ENCODE measurements at regions of chr13 and their contacts with region 1.

Region 1: DNA sequence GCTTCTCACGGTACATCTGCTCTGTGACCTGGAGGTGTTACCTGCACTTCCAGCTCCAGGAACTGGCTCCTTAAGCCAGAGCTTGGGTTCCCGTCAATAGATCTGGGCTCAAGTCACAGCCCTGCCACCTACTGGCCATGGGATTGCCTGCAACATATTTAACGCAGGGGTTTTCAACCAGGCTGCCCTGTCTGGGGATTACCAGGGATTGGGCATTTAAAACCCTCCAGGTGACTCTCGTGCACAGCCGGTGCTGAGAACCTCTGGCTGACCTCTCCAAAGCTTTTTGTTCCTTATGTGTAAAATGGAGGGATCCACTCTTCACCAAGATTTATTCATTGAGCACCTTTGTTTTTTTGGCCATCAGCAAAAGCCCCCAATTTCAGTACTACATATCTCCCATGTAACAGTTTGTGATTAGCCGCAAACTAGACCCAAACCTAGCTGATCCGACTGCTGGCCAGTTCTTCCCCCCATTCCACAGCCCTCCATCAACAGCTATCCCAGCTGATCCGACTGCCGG is 76.6 kb upstream of the STK24 start:
- DNase-seq: peak; percentile 78 to 87
- H3K4me3 ChIP-seq: no peak overlapping the region
- H3K27ac ChIP-seq: peak overlapping the region; percentile 18; the same call in 1 of the 2 replicates
- H3K4me1 ChIP-seq: peaks cover 47% of the 10 kb centered on the region
- H3K27me3 ChIP-seq: no peaks in the 10 kb centered on the region
- CTCF ChIP-seq: peak; percentile 96

Region 2: DNA sequence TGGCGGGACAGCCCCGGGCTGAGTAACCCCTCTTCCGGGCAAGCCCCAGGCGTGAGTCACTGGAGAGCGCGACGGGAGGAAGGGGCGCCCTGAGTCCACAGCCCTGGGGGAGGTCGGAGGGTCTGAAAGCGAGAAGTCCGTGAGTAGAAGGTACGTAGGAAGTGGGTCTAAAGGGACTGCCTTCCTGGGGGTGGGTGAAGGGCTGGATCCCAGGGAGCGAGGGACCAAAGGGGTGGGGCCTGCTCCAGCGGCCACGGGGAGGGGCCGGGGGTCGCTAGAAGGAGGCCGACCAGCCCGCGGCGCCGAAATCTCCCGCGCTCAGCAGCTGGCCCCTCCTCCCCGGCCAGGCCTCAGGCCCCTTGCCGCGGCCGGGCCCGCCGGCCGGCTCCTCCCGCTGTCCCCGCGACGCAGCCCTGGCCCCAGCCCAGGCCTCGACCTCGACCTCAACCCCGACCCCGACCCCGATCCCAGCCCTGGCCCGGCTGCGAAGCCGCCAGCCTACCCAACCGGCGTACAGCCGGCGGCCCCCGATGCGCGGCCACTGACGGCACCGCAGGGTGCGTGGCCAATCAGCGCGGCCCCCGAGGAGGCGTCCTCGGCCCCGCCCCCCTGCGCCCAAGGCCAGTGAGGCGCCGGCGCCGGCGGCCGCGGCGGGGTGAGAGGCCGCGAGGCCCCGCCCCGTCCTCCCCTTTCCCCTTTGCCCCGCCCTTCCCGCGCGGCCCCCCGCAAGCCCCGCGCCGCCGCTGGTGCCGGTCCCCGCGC is 677.5 kb before region 1 on chr13:
- CTCF ChIA-PET with region 1: no interaction called
- POLR2A ChIA-PET with region 1: no interaction called
- intact Hi-C with region 1: loop called (anchors 1 kb)
- DNase-seq: peak; percentile 74 to 91
- H3K4me3 ChIP-seq: peak overlapping the region; percentile 92
- H3K27ac ChIP-seq: peak overlapping the region; percentile 61
- H3K4me1 ChIP-seq: peaks cover 21% of the 10 kb centered on the region
- H3K27me3 ChIP-seq: no peaks in the 10 kb centered on the region
- CTCF ChIP-seq: no peak

Region 3: GRCh38 chr13:98411681-98412201 is 241.8 kb before region 1 on chr13:
- CTCF ChIA-PET with region 1: no interaction called
- POLR2A ChIA-PET with region 1: no interaction called
- intact Hi-C with region 1: no loop called
- DNase-seq: no peak
- H3K4me3 ChIP-seq: no peak overlapping the region
- H3K27ac ChIP-seq: no peak overlapping the region
- H3K4me1 ChIP-seq: peaks cover 20% of the 10 kb centered on the region
- H3K27me3 ChIP-seq: no peaks in the 10 kb centered on the region
- CTCF ChIP-seq: no peak

Region 4: GRCh38 chr13:98476538-98476966 is 177.0 kb before region 1 on chr13:
- CTCF ChIA-PET with region 1: no interaction called
- POLR2A ChIA-PET with region 1: interaction called, 5 read pairs
- intact Hi-C with region 1: loop called (anchors 2 kb)
- DNase-seq: peak; percentile 80 to 95
- H3K4me3 ChIP-seq: peak overlapping the region; percentile 20; the same call in 1 of the 2 replicates
- H3K27ac ChIP-seq: peak overlapping the region; percentile 94
- H3K4me1 ChIP-seq: peaks cover 44% of the 10 kb centered on the region
- H3K27me3 ChIP-seq: no peaks in the 10 kb centered on the region
- CTCF ChIP-seq: no peak

Region 5: DNA sequence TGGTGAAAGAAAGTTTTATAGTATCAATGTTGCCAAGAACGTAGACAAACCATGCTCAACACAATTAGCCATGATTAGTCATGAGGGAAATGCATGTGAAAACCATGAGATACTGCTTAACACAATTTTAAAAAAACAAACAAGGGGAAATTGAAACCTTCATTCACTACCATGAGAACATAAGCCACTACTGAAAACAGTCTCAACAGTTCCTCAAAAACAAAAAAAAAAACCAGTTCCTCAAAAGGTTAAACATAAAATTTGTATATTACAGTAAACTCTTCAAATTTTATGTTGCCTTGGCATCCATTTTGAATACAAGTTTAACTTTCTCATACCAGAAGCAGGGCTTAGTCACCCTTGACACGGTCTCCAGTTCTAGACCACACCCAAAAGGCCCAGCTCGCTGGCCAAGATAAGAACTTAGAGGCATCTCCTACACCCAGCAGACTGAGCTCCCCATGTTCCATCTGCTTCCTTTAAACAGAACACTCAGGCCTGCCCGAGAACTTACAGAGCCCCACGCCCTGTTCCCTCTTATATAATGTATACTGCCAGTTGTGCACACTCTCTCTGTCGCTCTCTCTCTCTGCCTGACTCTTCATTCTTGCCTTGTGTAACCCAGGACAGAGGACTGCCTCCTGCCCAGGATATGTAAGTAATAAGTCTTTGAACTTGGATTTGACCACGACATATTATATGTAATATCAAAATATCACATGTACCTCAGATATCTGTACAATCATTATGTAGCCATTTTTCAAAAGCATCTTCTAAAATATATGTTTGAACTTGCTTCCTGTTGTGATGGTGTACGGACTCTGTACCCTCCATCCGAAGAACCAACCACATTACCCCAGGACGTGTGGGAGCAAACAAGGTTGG is 144.0 kb before region 1 on chr13:
- CTCF ChIA-PET with region 1: no interaction called
- POLR2A ChIA-PET with region 1: interaction called, 4 read pairs
- intact Hi-C with region 1: loop called (anchors 1 kb)
- DNase-seq: peak; percentile 71 to 91
- H3K4me3 ChIP-seq: peak overlapping the region; percentile 31; the same call in 1 of the 2 replicates
- H3K27ac ChIP-seq: peak overlapping the region; percentile 99
- H3K4me1 ChIP-seq: peaks cover 58% of the 10 kb centered on the region
- H3K27me3 ChIP-seq: no peaks in the 10 kb centered on the region
- CTCF ChIP-seq: no peak

Region 6: DNA sequence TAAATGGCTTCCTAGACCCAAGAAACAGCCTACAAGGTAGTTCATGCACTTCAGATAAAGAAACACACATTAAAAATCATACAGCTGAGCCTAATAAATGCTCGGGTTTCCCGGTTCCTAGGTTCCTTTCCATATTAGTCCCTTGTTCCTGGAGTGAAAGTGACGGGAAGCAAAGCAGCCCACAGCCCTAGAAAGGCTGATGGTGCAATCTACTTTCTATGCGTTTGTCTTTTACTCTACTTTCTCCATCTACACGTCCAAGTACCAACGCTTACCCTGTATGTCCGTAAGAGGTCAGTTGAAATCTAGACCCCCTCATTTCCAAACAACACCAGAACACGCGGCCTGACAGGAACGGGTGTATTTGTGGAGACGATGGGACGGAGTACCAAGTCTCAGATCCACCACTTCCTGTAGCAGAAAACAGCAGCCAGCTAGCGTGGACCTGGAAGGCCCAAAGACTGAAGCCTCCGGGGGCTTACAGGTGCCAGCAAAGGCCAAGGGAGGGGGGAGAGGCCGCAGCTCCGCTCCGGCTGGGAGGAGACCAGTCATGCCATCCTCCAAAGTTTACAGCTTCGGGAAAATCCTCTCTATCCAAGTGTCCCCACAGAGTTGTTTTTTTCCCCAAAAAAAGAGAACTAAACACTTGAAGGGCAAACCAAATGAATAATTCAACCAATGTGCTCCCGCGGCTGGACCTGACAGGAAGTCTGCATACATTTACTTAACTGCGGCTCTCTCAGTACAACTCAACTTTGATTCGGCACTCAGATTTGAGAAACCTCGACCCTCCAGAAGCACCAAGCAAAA is 110.8 kb before region 1 on chr13:
- CTCF ChIA-PET with region 1: interaction called, 10 read pairs
- POLR2A ChIA-PET with region 1: no interaction called
- intact Hi-C with region 1: no loop called
- DNase-seq: no peak
- H3K4me3 ChIP-seq: no peak overlapping the region
- H3K27ac ChIP-seq: no peak overlapping the region
- H3K4me1 ChIP-seq: peaks cover 13% of the 10 kb centered on the region
- H3K27me3 ChIP-seq: no peaks in the 10 kb centered on the region
- CTCF ChIP-seq: no peak

Region 7: DNA sequence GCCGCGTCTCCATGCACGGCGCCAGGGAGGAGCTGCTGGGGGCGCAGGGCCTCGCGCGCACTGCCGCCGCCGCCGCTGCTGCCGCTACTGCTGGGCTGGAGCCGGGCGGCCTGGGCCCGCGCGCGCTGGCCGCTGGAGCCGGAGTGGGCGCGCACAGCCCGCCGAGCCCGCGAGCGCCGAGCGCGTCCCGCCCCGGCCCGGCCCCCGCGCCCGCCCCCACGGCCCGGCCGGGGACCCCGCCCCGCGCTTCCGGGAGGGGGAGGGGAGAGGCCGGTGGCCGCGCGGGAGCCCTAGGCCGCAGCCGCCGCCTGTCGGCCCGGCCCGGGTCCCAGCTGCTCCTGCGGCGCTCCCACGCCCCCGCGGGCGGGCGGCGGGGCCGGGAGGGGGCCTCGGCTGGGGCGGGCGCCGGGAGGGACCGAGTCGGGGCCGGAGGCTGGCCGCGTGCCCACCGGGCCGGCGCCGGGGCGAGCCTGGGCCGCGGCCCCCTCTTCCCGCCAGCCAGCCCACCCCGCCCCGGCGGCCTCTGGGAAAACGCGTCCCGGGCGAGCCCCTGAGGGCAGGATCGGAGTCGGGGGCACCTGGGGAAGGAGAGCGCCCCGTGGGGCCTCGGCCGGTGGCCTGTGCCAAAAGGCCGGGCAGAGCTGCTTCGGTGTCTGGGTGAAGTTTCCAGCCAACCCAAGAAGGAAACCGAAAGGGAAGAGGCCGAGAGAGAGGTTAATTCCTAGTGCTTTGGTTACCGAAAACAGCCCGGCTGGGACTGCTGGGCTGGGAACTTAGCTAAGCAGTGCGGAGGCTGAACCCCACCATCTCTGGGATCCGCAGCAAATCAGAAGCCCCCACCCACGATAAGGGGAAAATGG is 76.3 kb before region 1 on chr13 and contains the start of gene STK24:
- CTCF ChIA-PET with region 1: interaction called, 3 read pairs
- POLR2A ChIA-PET with region 1: no interaction called
- intact Hi-C with region 1: loop called (anchors 1 kb)
- DNase-seq: peak; percentile 45 to 80
- H3K4me3 ChIP-seq: peak within 1 kb of the TSS; percentile 98
- H3K27ac ChIP-seq: peak within 1 kb of the TSS; percentile 93
- H3K4me1 ChIP-seq: peaks cover 49% of the 10 kb centered on the region
- H3K27me3 ChIP-seq: no peaks in the 10 kb centered on the region
- CTCF ChIP-seq: no peak
- total RNA-seq, gene STK24: 134 and 139 TPM in 2 replicates

Region 8: DNA sequence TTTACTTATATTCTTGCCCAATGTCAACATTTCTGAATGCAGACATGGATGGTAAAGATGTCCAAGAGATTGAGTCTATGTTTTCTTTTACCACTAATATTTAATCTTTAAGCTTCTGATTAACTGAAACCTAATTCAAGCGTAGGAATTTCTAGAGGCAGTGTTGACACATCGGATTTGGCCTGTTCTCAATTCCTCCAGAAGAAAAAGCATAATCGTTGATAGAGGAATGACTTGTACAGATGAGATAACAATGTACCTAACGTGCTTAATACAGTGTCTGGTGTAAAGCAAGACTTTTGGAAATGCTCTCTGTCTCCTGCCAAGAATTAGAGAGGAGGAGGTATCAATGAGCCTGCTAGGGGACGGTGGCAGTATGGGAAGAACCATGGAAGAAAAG is 63.7 kb after region 1 on chr13:
- CTCF ChIA-PET with region 1: no interaction called
- POLR2A ChIA-PET with region 1: no interaction called
- intact Hi-C with region 1: no loop called
- DNase-seq: peak in 1 of 2 experiments; percentile 28
- H3K4me3 ChIP-seq: no peak overlapping the region
- H3K27ac ChIP-seq: no peak overlapping the region
- H3K4me1 ChIP-seq: peaks cover 8% of the 10 kb centered on the region
- H3K27me3 ChIP-seq: no peaks in the 10 kb centered on the region
- CTCF ChIP-seq: no peak

Region 9: DNA sequence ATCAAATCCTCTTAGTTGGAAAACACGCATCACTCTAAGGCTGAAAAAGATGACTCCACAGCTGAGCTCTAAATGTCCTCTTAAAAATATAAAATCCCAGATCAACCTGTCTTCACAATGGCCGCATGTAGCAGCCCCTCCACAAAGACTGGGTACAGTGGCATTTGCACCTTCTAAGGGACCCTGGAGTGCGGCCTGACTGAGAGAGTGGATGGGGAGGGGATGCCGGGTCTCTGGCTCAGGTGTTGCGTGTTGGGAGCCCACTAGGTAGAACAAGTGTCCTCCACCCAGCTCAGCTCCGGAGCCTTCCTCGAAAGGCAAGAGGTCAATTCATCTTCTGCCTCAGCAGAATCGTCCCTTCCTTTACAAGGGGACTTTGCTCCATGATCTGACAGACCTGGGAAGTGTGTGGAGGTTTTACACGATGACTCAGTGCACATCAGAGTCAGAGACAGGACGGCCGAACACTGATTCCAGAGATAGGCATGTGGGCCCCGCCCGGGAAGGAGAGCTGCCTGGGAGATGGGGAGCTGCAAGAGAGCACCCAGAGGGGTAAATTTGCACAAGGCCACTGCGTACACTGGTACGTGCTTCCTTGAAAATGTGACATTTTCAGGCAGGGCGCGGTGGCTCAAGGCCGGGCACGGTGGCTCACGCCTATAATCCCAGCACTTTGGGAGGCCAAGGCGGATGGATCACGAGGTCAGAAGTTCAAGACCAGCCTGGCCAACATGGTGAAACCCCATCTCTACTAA is 122.5 kb after region 1 on chr13:
- CTCF ChIA-PET with region 1: no interaction called
- POLR2A ChIA-PET with region 1: no interaction called
- intact Hi-C with region 1: no loop called
- DNase-seq: peak; percentile 87 to 99
- H3K4me3 ChIP-seq: no peak overlapping the region
- H3K27ac ChIP-seq: peak overlapping the region; percentile 54
- H3K4me1 ChIP-seq: peaks cover 11% of the 10 kb centered on the region
- H3K27me3 ChIP-seq: no peaks in the 10 kb centered on the region
- CTCF ChIP-seq: no peak

Region 10: DNA sequence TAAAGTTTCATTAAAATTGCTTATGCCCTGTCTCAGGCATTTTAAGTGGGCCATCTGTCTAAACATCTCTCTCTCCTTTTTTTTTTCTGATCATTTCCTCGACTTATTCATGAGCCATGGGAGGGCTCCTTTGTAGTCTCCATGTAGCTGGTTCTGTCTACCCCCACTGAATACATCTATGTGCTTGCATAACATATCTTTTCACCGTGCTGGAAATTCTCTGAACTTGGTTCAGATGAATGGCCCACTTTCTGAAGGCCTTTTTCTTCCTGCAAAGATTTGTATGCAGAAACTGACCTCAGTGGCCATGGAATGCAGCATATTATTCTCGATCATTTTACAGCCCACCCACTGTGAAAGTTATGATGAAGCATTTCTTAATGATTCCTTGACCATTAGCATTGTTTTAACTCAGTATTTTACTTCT is 1709.8 kb after region 1 on chr13:
- CTCF ChIA-PET with region 1: no interaction called
- POLR2A ChIA-PET with region 1: no interaction called
- intact Hi-C with region 1: no loop called
- DNase-seq: peak in 1 of 2 experiments; percentile 58
- H3K4me3 ChIP-seq: no peak overlapping the region
- H3K27ac ChIP-seq: peak overlapping the region; percentile 52; the same call in 1 of the 2 replicates
- H3K4me1 ChIP-seq: peaks cover 21% of the 10 kb centered on the region
- H3K27me3 ChIP-seq: no peaks in the 10 kb centered on the region
- CTCF ChIP-seq: no peak